ENCODE measurements at regions of chr19 and their contacts with region 1.

Region 1: DNA sequence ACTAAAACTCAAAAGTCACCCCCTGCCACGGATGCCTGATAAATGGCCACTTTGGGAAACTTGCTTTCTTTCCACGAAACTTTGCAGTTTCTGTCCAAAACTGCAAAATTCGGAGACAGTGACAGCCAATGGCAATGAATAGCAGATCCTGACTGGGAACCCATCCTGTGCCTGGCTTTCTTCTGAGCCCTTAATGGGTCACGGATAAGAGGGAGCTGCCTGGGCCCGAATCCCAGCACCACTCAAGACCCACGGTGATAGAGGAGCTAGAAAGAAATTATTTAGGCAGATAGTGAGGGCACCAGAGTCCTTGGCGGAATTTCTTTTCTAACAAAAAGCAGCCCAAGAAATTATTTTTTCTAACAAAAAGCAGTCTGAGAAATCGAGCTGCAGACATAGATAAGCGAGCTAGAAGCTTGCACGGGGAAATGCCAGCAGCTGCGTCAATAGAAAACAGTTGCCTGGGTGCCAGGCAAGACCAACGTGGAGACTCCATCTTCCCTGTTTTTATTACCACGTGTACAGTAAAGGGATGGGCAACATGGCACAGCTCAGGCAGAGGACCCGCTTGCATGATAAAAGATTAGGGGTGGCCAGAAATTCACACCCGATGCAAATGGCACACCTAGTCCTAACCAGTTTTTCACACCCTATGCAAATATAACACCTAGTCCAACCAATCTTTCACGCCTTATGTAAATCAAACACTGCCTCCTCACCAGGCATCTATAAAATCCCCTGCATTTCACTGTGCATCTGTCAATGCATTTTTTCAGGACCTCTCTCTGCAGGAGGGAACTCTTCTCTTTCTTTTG is 7.1 kb upstream of the HSH2D start:
- DNase-seq: no peak
- ATAC-seq: no peak
- H3K4me3 Mint-ChIP-seq: no peak overlapping the region
- H3K27ac Mint-ChIP-seq: no peak overlapping the region
- H3K4me1 Mint-ChIP-seq: no peaks in the 10 kb centered on the region
- H3K27me3 Mint-ChIP-seq: no peaks in the 10 kb centered on the region

Region 2: DNA sequence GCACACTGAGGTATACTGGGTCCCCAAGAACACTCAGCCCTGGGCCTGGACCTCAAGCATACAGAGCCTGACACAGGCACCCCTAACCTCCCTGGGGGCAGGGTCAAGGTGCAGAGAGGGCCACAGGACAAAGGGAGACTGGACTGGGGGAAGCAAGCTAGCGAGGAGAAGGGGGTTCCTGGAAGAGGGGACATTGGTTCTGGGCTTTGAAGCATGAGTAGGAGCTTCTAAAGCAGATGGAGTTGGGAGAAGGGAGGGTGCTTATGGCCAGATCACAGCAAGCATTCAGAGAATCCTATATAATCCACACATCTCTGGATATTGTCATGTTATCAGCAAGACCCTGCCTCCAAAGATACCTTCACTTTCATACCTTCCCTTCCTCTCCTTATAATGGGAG is 33.7 kb after region 1 on chr19:
- CTCF ChIA-PET with region 1: no interaction called
- POLR2A ChIA-PET with region 1: no interaction called
- intact Hi-C with region 1: loop called in 1 of 2 experiments (anchors 5 kb)
- DNase-seq: no peak
- ATAC-seq: no peak
- H3K4me3 Mint-ChIP-seq: no peak overlapping the region
- H3K27ac Mint-ChIP-seq: no peak overlapping the region
- H3K4me1 Mint-ChIP-seq: peaks cover 3% of the 10 kb centered on the region
- H3K27me3 Mint-ChIP-seq: no peaks in the 10 kb centered on the region

Region 3: DNA sequence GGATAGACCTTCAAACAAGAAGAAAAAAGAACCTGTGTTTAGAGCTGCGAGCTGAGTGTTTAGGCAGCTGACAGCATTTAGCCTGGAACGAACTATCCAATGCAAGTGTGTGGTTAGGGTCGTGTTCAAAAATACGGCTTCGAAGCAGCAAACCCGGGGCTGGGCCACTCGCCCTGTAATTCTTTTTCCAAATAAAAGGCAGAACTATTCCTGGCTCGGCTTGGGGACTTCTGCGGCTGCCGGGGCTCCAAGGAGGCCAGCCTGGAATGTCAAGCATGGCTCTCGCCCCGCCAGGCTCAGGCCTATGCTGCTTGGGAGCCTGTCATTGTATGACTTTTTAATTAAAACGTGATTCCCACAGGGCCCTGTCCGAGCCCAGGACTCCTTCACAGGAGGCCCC is 136.6 kb after region 1 on chr19:
- CTCF ChIA-PET with region 1: no interaction called
- POLR2A ChIA-PET with region 1: no interaction called
- intact Hi-C with region 1: no loop called
- DNase-seq: no peak
- ATAC-seq: no peak
- H3K4me3 Mint-ChIP-seq: no peak overlapping the region
- H3K27ac Mint-ChIP-seq: no peak overlapping the region
- H3K4me1 Mint-ChIP-seq: peaks cover 9% of the 10 kb centered on the region
- H3K27me3 Mint-ChIP-seq: peaks cover 5% of the 10 kb centered on the region

Region 4: GRCh38 chr19:16572332-16573211 is 436.2 kb after region 1 on chr19 and contains the start of gene SLC35E1:
- CTCF ChIA-PET with region 1: no interaction called
- POLR2A ChIA-PET with region 1: no interaction called
- intact Hi-C with region 1: no loop called
- DNase-seq: peak; percentile 96
- ATAC-seq: peak; percentile 97
- H3K4me3 Mint-ChIP-seq: peak within 1 kb of the TSS; percentile 96
- H3K27ac Mint-ChIP-seq: peak within 1 kb of the TSS; percentile 96
- H3K4me1 Mint-ChIP-seq: peaks cover 53% of the 10 kb centered on the region
- H3K27me3 Mint-ChIP-seq: no peaks in the 10 kb centered on the region
- total RNA-seq, gene SLC35E1: 51.5 to 72.1 TPM

Measured in activated CD4-positive, alpha-beta T cell treated with anti-CD3 and anti-CD28 coated beads for 36 hours (primary cell).